ENCODE measurements at regions of chr6 and their contacts with region 1.

Region 1: DNA sequence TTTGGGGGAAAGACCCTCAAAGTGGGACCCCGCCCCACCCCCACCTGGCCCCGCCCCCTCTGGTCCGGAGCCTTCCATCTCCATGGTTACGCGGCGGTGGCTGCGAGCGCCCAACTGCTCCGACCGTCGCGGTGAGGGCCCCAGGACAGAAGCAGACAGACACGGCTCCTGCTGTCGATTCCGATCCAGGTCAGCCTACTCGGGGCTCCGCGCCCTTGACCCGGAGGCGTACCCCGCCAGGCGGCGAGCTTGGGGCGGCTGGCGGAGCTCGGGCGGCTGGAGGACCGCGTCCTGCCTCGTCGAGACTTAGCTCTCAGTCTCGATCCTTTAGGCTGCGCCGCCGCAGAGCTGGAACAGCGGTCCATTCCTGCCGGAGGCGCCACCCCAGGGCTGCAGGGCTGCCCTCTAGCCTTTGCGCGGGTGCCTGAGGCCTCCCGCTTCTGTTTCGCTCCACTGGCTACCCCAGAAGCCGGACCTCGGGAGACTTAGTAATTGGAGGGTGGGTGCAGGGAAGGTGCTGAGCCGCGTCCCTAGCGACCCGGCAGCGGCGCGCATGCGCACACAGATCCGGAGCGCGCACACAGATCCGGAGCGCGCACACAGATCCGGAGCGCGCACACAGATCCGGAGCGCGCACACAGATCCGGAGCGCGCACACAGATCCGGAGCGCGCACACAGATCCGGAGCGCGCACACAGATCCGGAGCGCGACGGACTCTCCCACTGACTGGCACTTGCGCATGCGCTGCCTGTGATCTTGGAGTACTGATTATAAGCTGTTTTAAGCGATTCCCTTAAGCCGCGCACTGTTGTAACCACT is at the start of gene CFAP206:
- DNase-seq: peak; percentile 90
- H3K4me3 ChIP-seq: peak within 1 kb of the TSS; percentile 85
- H3K27ac ChIP-seq: peak within 1 kb of the TSS; percentile 50
- H3K4me1 ChIP-seq: peaks cover 5% of the 10 kb centered on the region
- CTCF ChIP-seq: 0 out of 2 replicates have a peak, but pooled peaks have one; percentile 36
- total RNA-seq, gene CFAP206: 0.19 TPM in 1 of 2 replicates, not detected in the other

Region 2: DNA sequence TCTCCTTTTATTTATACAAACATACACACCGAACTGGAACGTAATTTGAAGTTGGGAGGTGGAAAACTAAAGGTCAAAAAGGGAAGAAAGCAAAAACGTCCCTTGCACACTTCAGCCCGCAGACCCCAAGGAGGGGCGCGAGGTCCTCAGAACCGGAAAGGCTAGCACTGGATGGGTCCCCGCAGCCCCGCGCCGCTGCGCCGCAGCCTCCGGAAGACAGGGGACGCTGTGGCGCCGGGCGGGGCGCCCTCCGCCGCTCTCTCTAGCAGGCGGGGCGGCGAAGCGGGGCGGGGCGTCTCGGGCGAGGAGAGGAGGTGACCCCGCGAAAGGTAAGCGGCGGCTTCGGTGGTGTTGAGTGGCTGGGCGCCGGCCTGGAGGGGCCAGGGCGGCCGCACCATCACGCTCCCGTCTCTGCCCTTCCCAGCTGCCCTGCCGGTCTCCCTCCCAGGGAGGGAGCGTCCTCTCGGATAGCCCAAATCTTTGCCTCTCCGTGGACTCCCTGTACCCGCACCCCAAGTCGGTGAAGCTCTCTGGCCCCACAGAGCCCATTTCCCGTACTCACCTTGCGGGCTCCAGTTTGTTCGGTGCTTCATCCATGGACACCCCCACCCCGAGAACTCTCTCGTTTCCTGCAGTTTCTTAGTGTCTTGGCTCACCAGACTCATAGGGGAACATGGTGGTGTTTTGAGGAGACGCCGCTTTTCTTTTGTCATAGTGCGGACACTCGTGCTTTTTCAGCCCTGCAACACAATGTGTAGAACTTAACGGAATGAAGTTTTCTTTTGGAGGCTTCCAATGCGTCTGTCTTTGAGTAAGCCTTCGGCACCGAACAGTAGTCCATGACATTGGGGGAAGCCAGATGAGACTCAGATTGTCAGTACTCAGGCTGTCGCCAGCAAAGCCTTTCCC is 85.6 kb before region 1 on chr6 and contains the start of gene SMIM8:
- CTCF ChIA-PET with region 1: no interaction called
- POLR2A ChIA-PET with region 1: no interaction called
- intact Hi-C with region 1: loop called (anchors 1 kb)
- DNase-seq: peak; percentile 88
- H3K4me3 ChIP-seq: peak within 1 kb of the TSS; percentile 92
- H3K27ac ChIP-seq: no peak within 1 kb of the TSS
- H3K4me1 ChIP-seq: peaks cover 6% of the 10 kb centered on the region
- CTCF ChIP-seq: peak; percentile 92
- total RNA-seq, gene SMIM8: 6.6 TPM in 2 replicates

Region 3: GRCh38 chr6:87879132-87879861 is 471.2 kb after region 1 on chr6:
- CTCF ChIA-PET with region 1: no interaction called
- POLR2A ChIA-PET with region 1: no interaction called
- intact Hi-C with region 1: no loop called
- DNase-seq: peak; percentile 100
- H3K4me3 ChIP-seq: peak overlapping the region; percentile 11
- H3K27ac ChIP-seq: peak overlapping the region; percentile 99
- H3K4me1 ChIP-seq: peaks cover 78% of the 10 kb centered on the region
- CTCF ChIP-seq: no peak